ENCODE measurements at regions of chr16 and their contacts with region 1.

Region 1: DNA sequence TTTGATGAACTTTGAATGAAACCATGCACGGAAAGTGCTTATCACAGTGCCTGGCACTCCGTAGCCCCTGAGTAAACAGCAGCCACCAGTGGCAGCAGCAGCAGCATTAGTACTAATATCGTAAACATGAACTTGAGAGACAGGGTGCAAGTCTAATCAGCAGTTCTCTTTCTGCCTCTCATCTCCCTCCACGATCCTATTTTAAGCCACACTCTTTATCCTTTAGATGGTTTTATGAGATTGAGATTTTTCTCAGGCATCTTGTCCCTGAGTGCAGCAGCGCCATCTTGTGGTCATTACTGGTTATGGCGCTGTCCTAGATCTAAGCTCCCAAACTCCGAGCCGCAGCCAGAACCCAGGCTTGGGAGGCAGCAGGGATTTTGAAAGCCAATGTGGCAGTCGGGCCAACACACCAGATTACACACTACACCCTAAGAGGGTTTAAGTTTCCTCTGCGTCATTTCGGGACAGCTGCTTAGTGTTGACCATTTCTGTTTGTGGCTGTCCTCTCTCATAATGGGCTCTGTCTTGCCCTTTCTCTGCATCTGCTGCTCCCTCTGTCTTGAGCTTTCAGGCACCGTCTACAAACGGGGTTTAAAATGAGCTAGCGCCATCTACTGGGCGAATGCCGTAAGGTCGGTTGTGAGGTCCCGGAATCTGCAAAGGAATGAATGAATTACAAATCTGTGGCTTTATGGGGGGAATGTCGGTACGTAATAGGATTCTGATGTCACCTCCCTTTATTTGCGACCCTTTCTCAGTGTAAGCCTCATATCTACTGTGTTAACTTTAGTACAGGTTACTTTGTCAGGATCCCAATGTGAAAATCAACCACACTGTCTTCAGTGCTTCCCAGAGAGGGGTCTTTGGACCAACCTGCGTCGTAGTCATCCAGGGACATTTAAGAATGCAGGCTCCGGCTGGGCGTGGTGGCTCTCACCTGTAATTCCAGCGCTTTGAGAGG is 64.5 kb downstream of the CYLD start:
- DNase-seq: peak; percentile 86
- ATAC-seq: peak; percentile 96
- H3K4me3 ChIP-seq: peak overlapping the region; percentile 35 to 50
- H3K27ac ChIP-seq: no peak overlapping the region
- H3K4me1 ChIP-seq: peaks cover 0 to 3% of the 10 kb centered on the region in 2 experiments; a peak in 1 of 4 replicates
- H3K27me3 ChIP-seq: no peaks in the 10 kb centered on the region
- CTCF ChIP-seq: peak; percentile 77 to 97 (median 93)
- POLR2A ChIP-seq: no peak
- RAD21 ChIP-seq: peak; percentile 69

Region 2: GRCh38 chr16:50210266-50211038 is 595.9 kb before region 1 on chr16:
- CTCF ChIA-PET with region 1: interaction called, 20 read pairs
- POLR2A ChIA-PET with region 1: no interaction called
- RAD21 ChIA-PET with region 1: no interaction called
- intact Hi-C with region 1: loop called (anchors 2 kb)
- DNase-seq: peak; percentile 51
- ATAC-seq: peak; percentile 95
- H3K4me3 ChIP-seq: no peak overlapping the region
- H3K27ac ChIP-seq: no peak overlapping the region
- H3K4me1 ChIP-seq: peaks cover 0 to 15% of the 10 kb centered on the region in 2 experiments; a peak in 2 of 4 replicates
- H3K27me3 ChIP-seq: no peaks in the 10 kb centered on the region
- CTCF ChIP-seq: peak; percentile 68 to 85 (median 72)
- POLR2A ChIP-seq: no peak
- RAD21 ChIP-seq: peak; percentile 82

Region 3: GRCh38 chr16:50368410-50369132 is 437.8 kb before region 1 on chr16 and contains the start of gene BRD7:
- CTCF ChIA-PET with region 1: interaction called, 21 read pairs
- POLR2A ChIA-PET with region 1: interaction called, 4 read pairs
- RAD21 ChIA-PET with region 1: interaction called in 1 of 2 experiments, 3 read pairs
- intact Hi-C with region 1: no loop called
- DNase-seq: no peak
- ATAC-seq: peak; percentile 85
- H3K4me3 ChIP-seq: peak within 1 kb of the TSS; percentile 61 to 82
- H3K27ac ChIP-seq: peak within 1 kb of the TSS; percentile 62
- H3K4me1 ChIP-seq: peaks cover 10 to 19% of the 10 kb centered on the region in 2 experiments
- H3K27me3 ChIP-seq: no peaks in the 10 kb centered on the region
- CTCF ChIP-seq: peak in 1 of 3 experiments; percentile 35; a peak in 1 of 6 replicates
- POLR2A ChIP-seq: no peak
- RAD21 ChIP-seq: no peak
- total RNA-seq, gene BRD7: 85.4 TPM

Region 4: GRCh38 chr16:50671644-50672260 is 134.6 kb before region 1 on chr16:
- CTCF ChIA-PET with region 1: interaction called, 62 read pairs
- POLR2A ChIA-PET with region 1: interaction called, 4 read pairs
- RAD21 ChIA-PET with region 1: interaction called, 8 to 12 read pairs
- intact Hi-C with region 1: loop called (anchors 1 kb)
- DNase-seq: peak; percentile 64
- ATAC-seq: peak; percentile 74
- H3K4me3 ChIP-seq: no peak overlapping the region
- H3K27ac ChIP-seq: no peak overlapping the region
- H3K4me1 ChIP-seq: no peaks in the 10 kb centered on the region
- H3K27me3 ChIP-seq: no peaks in the 10 kb centered on the region
- CTCF ChIP-seq: peak; percentile 73 to 91 (median 78); a peak in 5 of 6 replicates
- POLR2A ChIP-seq: no peak
- RAD21 ChIP-seq: peak; percentile 74

Region 5: DNA sequence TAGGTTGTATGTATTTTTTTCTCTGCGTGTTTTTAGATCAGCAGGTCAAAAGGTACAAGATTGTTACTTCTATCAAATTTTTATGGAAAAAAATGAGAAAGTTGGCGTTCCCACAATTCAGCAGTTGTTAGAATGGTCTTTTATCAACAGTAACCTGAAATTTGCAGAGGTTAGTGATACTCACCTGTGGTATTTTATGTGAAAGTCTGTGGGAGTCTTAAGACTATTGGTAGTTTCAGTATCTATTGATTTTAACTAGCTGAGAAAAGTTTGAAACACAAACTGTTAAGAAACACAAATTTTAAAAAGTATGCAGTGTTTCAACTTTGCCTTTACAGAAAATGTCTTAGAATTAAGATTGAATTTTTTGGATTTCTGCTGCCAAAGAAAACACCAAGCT is 14.9 kb before region 1 on chr16:
- CTCF ChIA-PET with region 1: interaction called, 20 read pairs
- POLR2A ChIA-PET with region 1: no interaction called
- RAD21 ChIA-PET with region 1: no interaction called
- intact Hi-C with region 1: no loop called
- DNase-seq: no peak
- ATAC-seq: no peak
- H3K4me3 ChIP-seq: no peak overlapping the region
- H3K27ac ChIP-seq: no peak overlapping the region
- H3K4me1 ChIP-seq: no peaks in the 10 kb centered on the region
- H3K27me3 ChIP-seq: no peaks in the 10 kb centered on the region
- CTCF ChIP-seq: no peak
- POLR2A ChIP-seq: no peak
- RAD21 ChIP-seq: no peak

Measured in HCT116 (cell line).